ENCODE measurements at regions of chr7 and their contacts with region 1.

Region 1: GRCh38 chr7:77326696-77327628 is 89.2 kb downstream of the GSAP start:
- DNase-seq: no peak
- ATAC-seq: peak; percentile 70
- H3K4me3 ChIP-seq: no peak overlapping the region
- H3K4me3 Mint-ChIP-seq: no peak overlapping the region
- H3K27ac ChIP-seq: no peak overlapping the region
- H3K27ac Mint-ChIP-seq: no peak overlapping the region
- H3K4me1 ChIP-seq: peaks cover 18 to 34% of the 10 kb centered on the region in 2 donors
- H3K4me1 Mint-ChIP-seq: peaks cover 25 to 57% (median 37%) of the 10 kb centered on the region in 7 donors
- H3K27me3 ChIP-seq: no peaks in the 10 kb centered on the region
- H3K27me3 Mint-ChIP-seq: no peaks in the 10 kb centered on the region

Region 2: GRCh38 chr7:77188731-77189437 is 138.1 kb before region 1 on chr7:
- CTCF ChIA-PET with region 1: no interaction called
- POLR2A ChIA-PET with region 1: no interaction called
- intact Hi-C with region 1: no loop called
- DNase-seq: no peak
- ATAC-seq: peak; percentile 58
- H3K4me3 ChIP-seq: no peak overlapping the region
- H3K4me3 Mint-ChIP-seq: no peak overlapping the region
- H3K27ac ChIP-seq: no peak overlapping the region
- H3K27ac Mint-ChIP-seq: no peak overlapping the region
- H3K4me1 ChIP-seq: peaks cover 6 to 7% of the 10 kb centered on the region in 2 donors
- H3K4me1 Mint-ChIP-seq: peaks cover 0 to 19% (median 15%) of the 10 kb centered on the region in 7 donors
- H3K27me3 ChIP-seq: no peaks in the 10 kb centered on the region
- H3K27me3 Mint-ChIP-seq: no peaks in the 10 kb centered on the region

Region 3: GRCh38 chr7:77269360-77270093 is 57.4 kb before region 1 on chr7:
- CTCF ChIA-PET with region 1: no interaction called
- POLR2A ChIA-PET with region 1: no interaction called
- intact Hi-C with region 1: loop called in 1 of 2 experiments (anchors 5 kb)
- DNase-seq: no peak
- ATAC-seq: no peak
- H3K4me3 ChIP-seq: no peak overlapping the region
- H3K4me3 Mint-ChIP-seq: no peak overlapping the region
- H3K27ac ChIP-seq: no peak overlapping the region
- H3K27ac Mint-ChIP-seq: no peak overlapping the region
- H3K4me1 ChIP-seq: no peaks in the 10 kb centered on the region
- H3K4me1 Mint-ChIP-seq: peaks cover 0 to 20% (median 0%) of the 10 kb centered on the region in 7 donors
- H3K27me3 ChIP-seq: no peaks in the 10 kb centered on the region
- H3K27me3 Mint-ChIP-seq: no peaks in the 10 kb centered on the region